Posterior vena cava (tissue), 2 donors: ENCODE measurements at regions of chr3 and their contacts with region 1.

Region 1: GRCh38 chr3:16427103-16427965 is 86.2 kb downstream of the RFTN1 start:
- DNase-seq: no peak

Region 2: DNA sequence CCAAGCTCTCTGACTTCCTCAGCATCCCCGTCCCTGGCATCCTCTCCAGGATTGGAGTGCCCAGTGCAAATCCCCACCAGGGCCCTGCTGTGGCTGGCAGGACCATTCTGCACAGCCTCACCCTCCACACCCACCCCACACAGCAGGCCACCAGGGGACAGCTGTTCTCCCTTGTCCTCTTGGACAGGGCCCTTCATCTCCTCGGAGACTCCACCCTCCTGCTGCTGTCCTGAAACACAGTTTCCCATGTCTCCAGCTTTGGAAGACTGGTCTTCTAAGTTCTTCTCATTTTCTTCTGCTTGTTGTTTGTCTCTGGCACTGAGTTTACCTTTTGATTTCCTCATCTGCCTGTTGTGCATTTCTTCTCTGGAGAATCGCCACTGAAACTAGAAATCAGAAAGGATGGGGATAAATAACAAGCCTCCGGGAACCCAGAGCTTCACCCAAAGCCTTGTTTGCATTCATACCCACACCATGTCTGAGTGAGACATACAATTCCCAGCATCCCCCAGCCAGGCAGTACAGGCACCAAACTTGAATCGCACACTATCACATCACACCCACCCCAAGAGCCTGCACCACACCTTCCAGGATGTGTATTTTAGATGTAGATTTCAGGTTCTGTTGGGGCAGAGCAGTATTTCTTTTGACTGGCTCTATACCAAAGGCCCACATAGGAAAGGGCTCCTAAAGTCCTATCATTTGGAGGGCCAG is 110.3 kb before region 1 on chr3:
- intact Hi-C with region 1: loop called in 1 of 2 experiments (anchors 1 kb)
- DNase-seq: no peak

Region 3: DNA sequence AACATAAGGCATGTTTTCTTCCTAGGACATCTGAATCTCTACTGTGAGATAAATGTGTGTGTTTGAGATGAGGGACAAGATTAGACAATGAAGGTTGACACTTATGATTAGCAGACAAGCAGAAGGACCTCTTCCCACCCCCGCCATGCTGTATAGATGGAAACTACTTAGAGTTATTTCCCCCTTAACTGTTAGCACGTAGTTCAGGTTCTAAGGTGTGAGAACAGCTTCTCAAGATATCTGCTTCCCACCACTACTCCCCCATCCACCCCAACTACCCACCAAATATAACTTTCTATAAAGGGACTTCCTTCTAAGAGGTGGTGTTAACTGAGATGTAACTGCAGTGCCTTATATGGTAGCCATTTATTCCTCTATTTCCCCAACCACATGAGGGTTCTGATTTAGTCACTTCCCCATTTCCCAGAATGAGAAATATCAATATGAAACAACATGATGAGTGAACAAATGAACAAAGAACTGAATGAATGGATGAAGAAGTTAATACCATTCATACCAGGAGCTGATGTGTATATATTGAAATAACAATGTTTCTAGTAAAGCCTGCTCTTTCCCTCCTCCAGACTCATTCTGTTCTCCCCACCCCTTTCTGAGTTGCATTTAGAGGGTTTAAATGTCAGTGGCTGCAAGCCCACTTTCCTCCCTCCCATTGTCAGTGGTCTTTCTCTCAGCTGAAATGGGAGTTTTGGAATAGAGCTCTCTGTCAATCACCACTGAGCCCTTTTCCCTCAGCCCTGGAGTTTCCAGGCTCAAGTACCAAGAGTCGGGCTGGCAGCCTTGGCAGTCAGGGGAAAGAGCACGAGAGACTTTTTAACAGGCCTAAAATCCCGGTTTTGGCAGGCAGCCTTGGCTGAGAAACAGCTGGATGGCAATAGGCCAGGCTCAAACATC is 93.9 kb after region 1 on chr3:
- intact Hi-C with region 1: no loop called
- DNase-seq: no peak